ENCODE measurements at regions of chr1 and their contacts with region 1.

Region 1: GRCh38 chr1:182291584-182292192 is 99.9 kb downstream of the GLUL start:
- DNase-seq: no peak
- H3K4me3 ChIP-seq: no peak overlapping the region
- H3K27ac ChIP-seq: peak overlapping the region; percentile 75 to 87 (median 78)
- H3K4me1 ChIP-seq: peaks cover 0 to 29% (median 21%) of the 10 kb centered on the region in 4 donors
- H3K27me3 ChIP-seq: no peaks in the 10 kb centered on the region
- CTCF ChIP-seq: no peak
- EP300 ChIP-seq: no peak
- POLR2A ChIP-seq: no peak

Region 2: GRCh38 chr1:182143154-182143657 is 148.5 kb before region 1 on chr1:
- intact Hi-C with region 1: loop called (anchors 5 kb)
- DNase-seq: peak; percentile 96
- H3K4me3 ChIP-seq: no peak overlapping the region
- H3K27ac ChIP-seq: peak overlapping the region; percentile 90 to 94 (median 93)
- H3K4me1 ChIP-seq: peaks cover 0 to 30% (median 27%) of the 10 kb centered on the region in 4 donors
- H3K27me3 ChIP-seq: no peaks in the 10 kb centered on the region
- CTCF ChIP-seq: peak; percentile 86 to 97 (median 95)
- EP300 ChIP-seq: no peak
- POLR2A ChIP-seq: no peak

Region 3: DNA sequence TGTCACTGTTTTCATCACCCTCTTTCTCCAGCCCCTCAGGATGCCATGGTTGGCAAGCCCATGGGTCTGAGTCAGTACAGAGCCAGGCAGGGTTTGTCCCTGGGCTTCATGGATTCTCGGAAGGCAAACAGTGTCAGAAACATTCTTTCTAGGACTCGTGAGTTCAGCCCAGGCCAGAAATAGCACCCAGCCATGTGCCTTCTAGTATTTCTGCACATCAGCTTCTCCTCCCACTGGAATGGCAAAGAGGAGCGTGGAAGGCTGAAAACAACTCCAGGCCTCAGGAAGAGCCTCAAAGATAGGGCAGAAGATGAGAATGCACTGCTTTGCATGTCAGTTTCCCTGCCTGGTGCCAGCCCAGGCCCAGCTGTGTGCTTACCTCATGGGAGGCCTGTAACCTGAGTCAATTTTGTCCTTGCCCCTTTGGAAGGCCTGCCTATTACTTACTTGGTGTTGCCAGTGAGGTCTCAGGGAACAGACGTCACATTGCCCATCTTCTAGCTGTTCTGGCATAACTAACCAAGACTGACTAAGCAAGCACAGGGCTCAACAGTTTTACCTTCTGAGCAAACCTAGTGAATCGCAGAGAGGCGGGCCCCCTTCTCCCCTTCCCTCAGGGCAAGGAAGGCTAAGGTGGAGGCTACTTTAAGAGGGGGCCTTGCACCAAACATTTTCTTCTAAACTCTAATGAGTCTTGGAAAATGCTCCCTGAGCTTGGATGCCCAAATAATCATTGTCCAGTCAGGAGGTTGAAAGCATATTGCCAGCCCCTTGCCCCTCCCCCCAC is 57.5 kb after region 1 on chr1:
- intact Hi-C with region 1: loop called (anchors 5 kb)
- DNase-seq: peak; percentile 69
- H3K4me3 ChIP-seq: no peak overlapping the region
- H3K27ac ChIP-seq: peak overlapping the region; percentile 51 to 83 (median 68)
- H3K4me1 ChIP-seq: peaks cover 0 to 26% (median 20%) of the 10 kb centered on the region in 4 donors
- H3K27me3 ChIP-seq: no peaks in the 10 kb centered on the region
- CTCF ChIP-seq: no peak
- EP300 ChIP-seq: peak in 2 of 4 donors; percentile 72 to 87
- POLR2A ChIP-seq: no peak